Activated CD4-positive, alpha-beta T cell treated with anti-CD3 and anti-CD28 coated beads for 36 hours (primary cell): ENCODE measurements at regions of chr3 and their contacts with region 1.

Region 1: DNA sequence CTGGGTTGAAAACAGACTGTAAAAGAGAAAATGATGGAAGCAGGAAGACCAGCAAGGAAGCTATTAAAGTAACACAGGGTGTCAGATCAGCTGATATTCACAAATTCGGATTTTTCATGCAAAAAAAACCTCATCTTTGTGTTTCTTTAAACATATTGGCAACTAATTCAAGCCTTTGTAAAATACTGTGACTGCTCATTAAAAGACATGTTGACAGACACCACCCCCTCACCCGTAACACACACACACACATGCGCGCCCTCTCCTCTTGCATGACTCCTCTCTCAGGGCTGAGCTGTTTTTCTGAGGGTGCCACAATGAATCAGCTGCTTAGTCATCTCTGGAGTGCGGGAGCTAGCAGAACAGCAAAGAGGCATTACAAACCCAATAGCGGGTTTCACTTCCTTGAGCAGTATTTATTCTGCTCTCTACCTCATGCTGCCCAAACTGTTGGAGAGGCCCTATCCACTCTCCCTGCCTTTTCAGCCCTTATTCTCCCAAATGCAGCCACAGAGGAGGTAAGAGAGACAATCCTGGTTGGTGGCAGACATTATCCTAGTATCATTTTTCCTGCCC is 35.8 kb upstream of the CCDC80 start:
- DNase-seq: peak; percentile 94
- ATAC-seq: peak; percentile 98
- H3K4me3 Mint-ChIP-seq: no peak overlapping the region
- H3K27ac Mint-ChIP-seq: peak overlapping the region; percentile 27
- H3K4me1 Mint-ChIP-seq: peaks cover 41% of the 10 kb centered on the region
- H3K27me3 Mint-ChIP-seq: peaks cover 19% of the 10 kb centered on the region

Region 2: GRCh38 chr3:112464264-112464663 is 212.5 kb before region 1 on chr3:
- CTCF ChIA-PET with region 1: no interaction called
- POLR2A ChIA-PET with region 1: no interaction called
- intact Hi-C with region 1: loop called in 1 of 2 experiments (anchors 5 kb)
- DNase-seq: no peak
- ATAC-seq: no peak
- H3K4me3 Mint-ChIP-seq: no peak overlapping the region
- H3K27ac Mint-ChIP-seq: peak overlapping the region; percentile 52
- H3K4me1 Mint-ChIP-seq: peaks cover 82% of the 10 kb centered on the region
- H3K27me3 Mint-ChIP-seq: no peaks in the 10 kb centered on the region

Region 3: GRCh38 chr3:112598731-112599130 is 78.0 kb before region 1 on chr3:
- CTCF ChIA-PET with region 1: no interaction called
- POLR2A ChIA-PET with region 1: no interaction called
- intact Hi-C with region 1: no loop called
- DNase-seq: no peak
- ATAC-seq: no peak
- H3K4me3 Mint-ChIP-seq: no peak overlapping the region
- H3K27ac Mint-ChIP-seq: no peak overlapping the region
- H3K4me1 Mint-ChIP-seq: peaks cover 16% of the 10 kb centered on the region
- H3K27me3 Mint-ChIP-seq: no peaks in the 10 kb centered on the region

Region 4: DNA sequence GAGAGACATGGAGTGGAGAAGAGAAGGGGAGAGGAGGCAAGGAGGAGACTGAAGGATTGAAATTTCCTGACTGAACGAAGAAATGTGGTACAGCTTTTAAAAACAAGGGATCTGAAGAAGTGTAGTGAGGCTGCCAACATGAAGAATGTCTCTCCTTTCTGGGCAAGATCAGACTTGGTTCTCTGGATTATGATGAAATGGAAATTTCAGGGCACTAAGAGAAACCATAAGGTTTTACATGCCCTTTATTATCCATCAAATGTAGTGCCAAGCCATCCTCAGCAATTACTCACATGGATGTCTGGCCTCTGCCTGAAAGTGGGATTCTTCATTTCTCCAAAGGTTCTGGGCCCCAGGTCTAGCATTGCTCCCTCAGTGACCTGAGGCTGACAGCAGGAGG is 41.8 kb after region 1 on chr3:
- CTCF ChIA-PET with region 1: no interaction called
- POLR2A ChIA-PET with region 1: no interaction called
- intact Hi-C with region 1: no loop called
- DNase-seq: no peak
- ATAC-seq: no peak
- H3K4me3 Mint-ChIP-seq: no peak overlapping the region
- H3K27ac Mint-ChIP-seq: no peak overlapping the region
- H3K4me1 Mint-ChIP-seq: no peaks in the 10 kb centered on the region
- H3K27me3 Mint-ChIP-seq: peaks cover 3% of the 10 kb centered on the region

Region 5: GRCh38 chr3:112769286-112769978 is 92.7 kb after region 1 on chr3:
- CTCF ChIA-PET with region 1: no interaction called
- POLR2A ChIA-PET with region 1: no interaction called
- intact Hi-C with region 1: loop called in 1 of 2 experiments (anchors 1 kb)
- DNase-seq: no peak
- ATAC-seq: peak; percentile 65
- H3K4me3 Mint-ChIP-seq: no peak overlapping the region
- H3K27ac Mint-ChIP-seq: peak overlapping the region; percentile 74
- H3K4me1 Mint-ChIP-seq: peaks cover 22% of the 10 kb centered on the region
- H3K27me3 Mint-ChIP-seq: no peaks in the 10 kb centered on the region

Region 6: GRCh38 chr3:112973325-112974177 is 296.8 kb after region 1 on chr3:
- CTCF ChIA-PET with region 1: interaction called, 4 read pairs
- POLR2A ChIA-PET with region 1: no interaction called
- intact Hi-C with region 1: loop called (anchors 1 to 2 kb)
- DNase-seq: peak; percentile 69
- ATAC-seq: peak; percentile 87
- H3K4me3 Mint-ChIP-seq: peak overlapping the region; percentile 73
- H3K27ac Mint-ChIP-seq: peak overlapping the region; percentile 91
- H3K4me1 Mint-ChIP-seq: peaks cover 87% of the 10 kb centered on the region
- H3K27me3 Mint-ChIP-seq: peaks cover 2% of the 10 kb centered on the region

Region 7: GRCh38 chr3:113002679-113003078 is 325.9 kb after region 1 on chr3:
- CTCF ChIA-PET with region 1: no interaction called
- POLR2A ChIA-PET with region 1: interaction called, 5 read pairs
- intact Hi-C with region 1: loop called in 1 of 2 experiments (anchors 5 kb)
- DNase-seq: peak; percentile 77
- ATAC-seq: peak; percentile 77
- H3K4me3 Mint-ChIP-seq: no peak overlapping the region
- H3K27ac Mint-ChIP-seq: peak overlapping the region; percentile 89
- H3K4me1 Mint-ChIP-seq: peaks cover 83% of the 10 kb centered on the region
- H3K27me3 Mint-ChIP-seq: no peaks in the 10 kb centered on the region